K562 (cell line): ENCODE measurements at regions of chr16 and their contacts with region 1.

Region 1: DNA sequence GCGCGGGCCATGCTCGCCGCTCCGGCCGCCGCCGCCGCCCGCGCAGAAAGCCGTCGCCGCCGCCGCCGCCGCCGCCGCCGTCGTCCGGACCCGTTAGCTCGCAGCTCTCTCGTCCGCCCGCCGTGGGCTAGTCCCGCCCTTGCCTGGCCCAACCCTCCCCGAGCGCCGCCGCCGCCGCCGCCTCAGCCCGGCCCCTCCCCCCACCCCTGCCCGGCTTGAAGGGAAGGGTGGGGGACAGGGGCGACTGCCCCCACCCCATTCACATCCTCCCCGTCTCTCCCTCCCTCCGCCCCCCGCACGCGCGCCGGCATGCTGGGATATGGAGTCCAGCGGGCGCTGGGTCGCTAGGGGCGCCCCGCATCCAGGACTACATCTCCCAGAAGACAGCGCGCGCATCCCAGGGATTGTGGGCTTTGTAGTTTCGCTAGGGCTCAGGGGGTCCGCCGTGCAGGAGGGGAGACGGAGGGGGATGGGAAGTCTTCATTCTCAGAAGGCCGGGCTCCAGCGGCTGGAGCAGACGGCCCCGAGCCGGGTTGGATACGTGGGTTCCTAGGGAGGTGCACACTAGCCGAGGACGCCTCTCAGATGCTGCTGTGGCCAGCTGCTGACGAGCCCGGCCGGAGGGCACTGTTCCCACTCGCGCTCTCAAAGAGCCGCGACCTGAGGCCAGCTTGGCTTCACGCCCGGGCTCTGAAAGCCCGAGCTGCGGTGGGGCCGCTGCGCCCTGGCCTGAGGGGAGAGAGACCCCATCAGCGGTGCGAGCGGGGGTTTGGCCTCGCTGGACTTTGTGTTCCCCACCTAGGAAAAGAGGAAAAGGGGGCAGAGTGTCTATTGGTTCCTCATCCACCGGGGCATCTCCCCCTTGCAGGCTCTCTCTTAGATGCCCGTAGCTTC is at the start of gene ST3GAL2:
- DNase-seq: peak; percentile 95 to 98 (median 96)
- ATAC-seq: peak; percentile 88
- H3K4me3 ChIP-seq: peak within 1 kb of the TSS; percentile 94
- H3K27ac ChIP-seq: peak within 1 kb of the TSS; percentile 93
- H3K4me1 ChIP-seq: peaks cover 32 to 34% of the 10 kb centered on the region in 2 experiments
- H3K27me3 ChIP-seq: no peaks in the 10 kb centered on the region
- CTCF ChIP-seq: peak in 2 of 3 experiments; percentile 10 to 21; a peak in 2 of 6 replicates
- EP300 ChIP-seq: 0 out of 2 replicates have a peak, but pooled peaks have one; percentile 16
- POLR2A ChIP-seq: peak; percentile 58
- RAD21 ChIP-seq: no peak
- polyA plus RNA-seq, gene ST3GAL2: 1.5 to 2.4 TPM

Region 2: DNA sequence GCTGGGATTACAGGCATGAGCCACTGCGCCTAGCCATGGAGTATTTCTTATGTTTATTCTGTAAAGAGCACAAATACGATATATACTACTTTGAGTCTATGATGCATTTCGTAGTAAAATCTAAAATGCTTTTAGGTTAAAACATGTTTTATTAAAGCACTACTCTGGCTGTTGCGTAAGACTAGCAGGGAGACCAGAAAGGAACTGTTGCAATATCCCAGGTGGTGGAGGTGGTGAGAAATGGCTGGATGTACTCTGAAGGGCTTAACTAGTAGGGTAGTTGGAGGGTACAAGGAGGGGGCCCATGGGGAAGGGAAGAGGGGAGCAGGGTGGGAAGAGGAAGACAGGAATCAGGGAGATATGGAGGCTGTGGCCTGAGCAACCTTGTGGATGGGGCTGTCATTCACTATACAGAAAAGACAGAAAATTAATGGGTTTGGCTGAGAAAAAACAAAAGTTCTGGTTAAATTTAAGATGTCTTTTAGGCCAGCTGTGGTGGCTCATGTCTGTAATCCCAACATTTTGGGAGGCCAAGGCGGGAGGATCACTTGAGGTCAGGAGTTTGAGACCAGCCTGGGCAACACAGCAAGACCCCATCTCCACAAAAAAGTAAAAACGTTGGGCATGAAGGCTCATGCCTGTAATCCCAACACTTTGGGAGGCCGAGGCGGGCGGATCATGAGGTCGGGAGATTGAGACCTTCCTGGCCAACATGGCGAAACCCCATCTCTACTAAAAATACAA is 36.1 kb before region 1 on chr16:
- CTCF ChIA-PET with region 1: no interaction called
- POLR2A ChIA-PET with region 1: interaction called, 17 read pairs
- in situ Hi-C with region 1: no loop called
- intact Hi-C with region 1: loop called (anchors 2 kb)
- DNase-seq: no peak
- ATAC-seq: no peak
- H3K4me3 ChIP-seq: no peak overlapping the region
- H3K27ac ChIP-seq: peak overlapping the region; percentile 69; the same call in 1 of the 3 replicates
- H3K4me1 ChIP-seq: peaks cover 24 to 51% of the 10 kb centered on the region in 2 experiments
- H3K27me3 ChIP-seq: no peaks in the 10 kb centered on the region
- CTCF ChIP-seq: no peak
- EP300 ChIP-seq: no peak
- POLR2A ChIP-seq: no peak
- RAD21 ChIP-seq: no peak

Region 3: GRCh38 chr16:70428178-70428998 is 10.8 kb before region 1 on chr16:
- CTCF ChIA-PET with region 1: no interaction called
- POLR2A ChIA-PET with region 1: interaction called, 14 read pairs
- in situ Hi-C with region 1: no loop called
- intact Hi-C with region 1: loop called (anchors 1 kb)
- DNase-seq: peak; percentile 90 to 99 (median 93)
- ATAC-seq: peak; percentile 83
- H3K4me3 ChIP-seq: no peak overlapping the region; the same call in 1 of the 2 replicates
- H3K27ac ChIP-seq: peak overlapping the region; percentile 98
- H3K4me1 ChIP-seq: peaks cover 75 to 78% of the 10 kb centered on the region in 2 experiments
- H3K27me3 ChIP-seq: no peaks in the 10 kb centered on the region
- CTCF ChIP-seq: no peak
- EP300 ChIP-seq: peak; percentile 100
- POLR2A ChIP-seq: peak; percentile 85
- RAD21 ChIP-seq: peak; percentile 41 to 50; a peak in 3 of 4 replicates

Region 4: GRCh38 chr16:70454222-70455034 is 15.2 kb after region 1 on chr16 and contains the start of gene FCSK:
- CTCF ChIA-PET with region 1: interaction called, 3 read pairs
- POLR2A ChIA-PET with region 1: interaction called, 10 read pairs
- in situ Hi-C with region 1: no loop called
- intact Hi-C with region 1: no loop called
- DNase-seq: peak; percentile 80 to 84 (median 83)
- ATAC-seq: peak; percentile 93
- H3K4me3 ChIP-seq: peak within 1 kb of the TSS; percentile 95
- H3K27ac ChIP-seq: peak within 1 kb of the TSS; percentile 97
- H3K4me1 ChIP-seq: peaks cover 10 to 23% of the 10 kb centered on the region in 2 experiments; a peak in 4 of 5 replicates
- H3K27me3 ChIP-seq: no peaks in the 10 kb centered on the region
- CTCF ChIP-seq: peak in 1 of 3 experiments; percentile 29; a peak in 1 of 6 replicates
- EP300 ChIP-seq: no peak; the same call in 1 of the 2 replicates
- POLR2A ChIP-seq: peak; percentile 28; the same call in 1 of the 2 replicates
- RAD21 ChIP-seq: peak in 1 of 2 experiments; percentile 19; a peak in 1 of 4 replicates
- polyA plus RNA-seq, gene FCSK: 0.92 to 1.1 TPM